ENCODE measurements at regions of chr19 and their contacts with region 1.

Region 1: GRCh38 chr19:4968462-4969291 is at the start of gene KDM4B:
- DNase-seq: peak; percentile 99
- ATAC-seq: peak; percentile 87 to 97 (median 89)
- H3K4me3 ChIP-seq: peak within 1 kb of the TSS; percentile 51
- H3K4me3 Mint-ChIP-seq: peak within 1 kb of the TSS; percentile 90
- H3K27ac ChIP-seq: peak within 1 kb of the TSS; percentile 58
- H3K27ac Mint-ChIP-seq: peak within 1 kb of the TSS; percentile 94 to 97
- H3K4me1 ChIP-seq: peaks cover 33% of the 10 kb centered on the region
- H3K4me1 Mint-ChIP-seq: peaks cover 32 to 41% of the 10 kb centered on the region in 2 donors
- H3K27me3 ChIP-seq: no peaks in the 10 kb centered on the region
- H3K27me3 Mint-ChIP-seq: no peaks in the 10 kb centered on the region
- CTCF ChIP-seq: no peak
- total RNA-seq, gene KDM4B: 68.0 to 73.5 (median 68.1) TPM

Region 2: GRCh38 chr19:4791170-4792018 is 177.3 kb before region 1 on chr19 and contains the start of gene FEM1A:
- intact Hi-C with region 1: loop called (anchors 2 kb)
- DNase-seq: peak; percentile 97 to 100
- ATAC-seq: peak; percentile 91 to 98 (median 91)
- H3K4me3 ChIP-seq: peak within 1 kb of the TSS; percentile 76
- H3K4me3 Mint-ChIP-seq: peak within 1 kb of the TSS; percentile 95
- H3K27ac ChIP-seq: peak within 1 kb of the TSS; percentile 84
- H3K27ac Mint-ChIP-seq: peak within 1 kb of the TSS; percentile 88
- H3K4me1 ChIP-seq: peaks cover 34% of the 10 kb centered on the region
- H3K4me1 Mint-ChIP-seq: peaks cover 6 to 21% of the 10 kb centered on the region in 2 donors
- H3K27me3 ChIP-seq: no peaks in the 10 kb centered on the region
- H3K27me3 Mint-ChIP-seq: no peaks in the 10 kb centered on the region
- CTCF ChIP-seq: peak; percentile 98
- total RNA-seq, gene FEM1A: 11.0 to 13.9 (median 13.7) TPM

Region 3: GRCh38 chr19:4909897-4910593 is 58.6 kb before region 1 on chr19:
- intact Hi-C with region 1: loop called (anchors 2 kb)
- DNase-seq: peak; percentile 95
- ATAC-seq: peak; percentile 92 to 95 (median 95)
- H3K4me3 ChIP-seq: peak overlapping the region; percentile 25
- H3K4me3 Mint-ChIP-seq: peak overlapping the region; percentile 88
- H3K27ac ChIP-seq: no peak overlapping the region
- H3K27ac Mint-ChIP-seq: peak overlapping the region in 1 of 2 donors; percentile 98
- H3K4me1 ChIP-seq: peaks cover 56% of the 10 kb centered on the region
- H3K4me1 Mint-ChIP-seq: peaks cover 52 to 59% of the 10 kb centered on the region in 2 donors
- H3K27me3 ChIP-seq: no peaks in the 10 kb centered on the region
- H3K27me3 Mint-ChIP-seq: no peaks in the 10 kb centered on the region
- CTCF ChIP-seq: no peak

Region 4: GRCh38 chr19:5138606-5139582 is 170.2 kb after region 1 on chr19:
- intact Hi-C with region 1: loop called (anchors 1 kb)
- DNase-seq: peak; percentile 85 to 89
- ATAC-seq: peak; percentile 72 to 89 (median 82)
- H3K4me3 ChIP-seq: no peak overlapping the region
- H3K4me3 Mint-ChIP-seq: peak overlapping the region; percentile 79
- H3K27ac ChIP-seq: no peak overlapping the region
- H3K27ac Mint-ChIP-seq: peak overlapping the region; percentile 85 to 94
- H3K4me1 ChIP-seq: peaks cover 81% of the 10 kb centered on the region
- H3K4me1 Mint-ChIP-seq: peaks cover 23 to 38% of the 10 kb centered on the region in 2 donors
- H3K27me3 ChIP-seq: no peaks in the 10 kb centered on the region
- H3K27me3 Mint-ChIP-seq: peaks cover 0 to 3% of the 10 kb centered on the region in 2 donors
- CTCF ChIP-seq: no peak

Measured in natural killer cell (primary cell).